IMR-90 (cell line): ENCODE measurements at regions of chr11 and their contacts with region 1.

Region 1: GRCh38 chr11:86919557-86920210 is 35.5 kb downstream of the FZD4 start:
- DNase-seq: peak; percentile 81
- ATAC-seq: peak; percentile 70
- H3K4me3 ChIP-seq: no peak overlapping the region
- H3K27ac ChIP-seq: no peak overlapping the region
- H3K4me1 ChIP-seq: peaks cover 8% of the 10 kb centered on the region
- H3K27me3 ChIP-seq: no peaks in the 10 kb centered on the region
- CTCF ChIP-seq: peak; percentile 82
- POLR2A ChIP-seq: no peak
- RAD21 ChIP-seq: peak; percentile 85

Region 2: GRCh38 chr11:86360775-86361395 is 558.8 kb before region 1 on chr11:
- CTCF ChIA-PET with region 1: no interaction called
- POLR2A ChIA-PET with region 1: no interaction called
- dilution Hi-C with region 1: no loop called
- in situ Hi-C with region 1: no loop called
- intact Hi-C with region 1: loop called (anchors 2 kb)
- DNase-seq: peak; percentile 73
- ATAC-seq: peak; percentile 89
- H3K4me3 ChIP-seq: no peak overlapping the region
- H3K27ac ChIP-seq: no peak overlapping the region
- H3K4me1 ChIP-seq: peaks cover 3% of the 10 kb centered on the region; the same call in 1 of the 2 replicates
- H3K27me3 ChIP-seq: no peaks in the 10 kb centered on the region
- CTCF ChIP-seq: peak; percentile 63
- POLR2A ChIP-seq: no peak
- RAD21 ChIP-seq: peak; percentile 68

Region 3: GRCh38 chr11:86671682-86672621 is 247.7 kb before region 1 on chr11 and contains the start of gene ME3:
- CTCF ChIA-PET with region 1: no interaction called
- POLR2A ChIA-PET with region 1: no interaction called
- dilution Hi-C with region 1: no loop called
- in situ Hi-C with region 1: no loop called
- intact Hi-C with region 1: loop called (anchors 10 kb)
- DNase-seq: peak; percentile 44
- ATAC-seq: peak; percentile 83
- H3K4me3 ChIP-seq: peak within 1 kb of the TSS; percentile 64
- H3K27ac ChIP-seq: peak within 1 kb of the TSS; percentile 18; the same call in 1 of the 2 replicates
- H3K4me1 ChIP-seq: 0 out of 2 replicates have a peak, but pooled peaks cover 2% of the 10 kb centered on the region
- H3K27me3 ChIP-seq: no peaks in the 10 kb centered on the region
- CTCF ChIP-seq: no peak
- POLR2A ChIP-seq: no peak
- RAD21 ChIP-seq: 0 out of 2 replicates have a peak, but pooled peaks have one; percentile 3
- total RNA-seq, gene ME3: 9.0 and 9.2 TPM in 2 replicates

Region 4: DNA sequence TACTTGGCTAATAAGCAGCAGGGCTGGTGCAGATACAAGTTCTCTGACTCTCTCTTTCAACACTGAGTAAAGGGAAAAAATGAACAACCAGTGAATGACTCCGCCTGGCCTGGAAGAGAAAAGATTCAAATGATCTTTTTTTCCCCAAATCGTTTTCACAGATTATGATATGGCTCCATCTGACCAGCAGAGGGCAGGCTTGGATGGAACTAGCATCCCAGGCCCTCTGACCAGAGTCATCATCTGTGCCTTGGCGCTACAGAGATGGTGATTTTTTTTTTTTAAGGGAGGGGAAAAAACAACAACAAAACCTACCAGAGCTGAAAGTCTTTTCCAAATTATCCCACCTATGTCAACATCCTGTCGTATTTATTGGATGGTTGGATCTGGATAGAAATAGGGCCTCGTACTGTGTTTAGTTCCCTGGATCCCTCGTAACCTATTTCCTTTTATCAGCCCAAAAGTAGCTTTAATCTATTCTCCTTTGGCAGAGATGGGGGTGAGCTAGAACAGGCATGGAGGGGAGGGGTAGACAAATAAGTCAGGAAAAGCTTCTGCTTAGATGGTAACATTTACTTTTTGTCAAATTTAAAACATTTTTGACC is 49.6 kb before region 1 on chr11:
- CTCF ChIA-PET with region 1: interaction called, 17 read pairs
- POLR2A ChIA-PET with region 1: no interaction called
- dilution Hi-C with region 1: no loop called
- in situ Hi-C with region 1: loop called (anchors 5 kb)
- intact Hi-C with region 1: loop called (anchors 1 kb)
- DNase-seq: peak; percentile 63
- ATAC-seq: peak; percentile 90
- H3K4me3 ChIP-seq: no peak overlapping the region
- H3K27ac ChIP-seq: no peak overlapping the region
- H3K4me1 ChIP-seq: peaks cover 3% of the 10 kb centered on the region; the same call in 1 of the 2 replicates
- H3K27me3 ChIP-seq: no peaks in the 10 kb centered on the region; the same call in 1 of the 2 replicates
- CTCF ChIP-seq: peak; percentile 86
- POLR2A ChIP-seq: peak; percentile 28; the same call in 1 of the 2 replicates
- RAD21 ChIP-seq: peak; percentile 92

Region 5: DNA sequence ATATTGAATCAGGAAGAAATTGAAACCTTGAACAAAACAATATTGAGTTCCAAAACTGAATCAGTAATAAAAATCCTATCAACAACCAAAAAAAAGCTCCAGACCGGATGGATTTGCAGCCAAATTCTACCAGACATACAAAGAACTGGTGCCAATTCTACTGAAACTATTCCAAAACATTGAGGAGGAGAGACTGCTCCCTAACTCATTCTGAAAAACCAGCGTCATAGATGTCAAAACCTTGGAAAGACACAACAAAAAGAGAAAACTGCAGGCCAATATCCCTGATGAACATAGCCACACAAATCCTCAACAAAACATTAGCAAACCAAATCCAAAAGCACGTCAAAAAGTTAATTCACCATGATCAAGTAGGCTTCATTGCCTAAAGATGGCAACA is 471.8 kb after region 1 on chr11:
- CTCF ChIA-PET with region 1: no interaction called
- POLR2A ChIA-PET with region 1: no interaction called
- dilution Hi-C with region 1: no loop called
- in situ Hi-C with region 1: no loop called
- intact Hi-C with region 1: no loop called
- DNase-seq: no peak
- ATAC-seq: no peak
- H3K4me3 ChIP-seq: no peak overlapping the region
- H3K27ac ChIP-seq: no peak overlapping the region
- H3K4me1 ChIP-seq: no peaks in the 10 kb centered on the region
- H3K27me3 ChIP-seq: no peaks in the 10 kb centered on the region
- CTCF ChIP-seq: no peak
- POLR2A ChIP-seq: no peak
- RAD21 ChIP-seq: no peak